ENCODE measurements at regions of chr12 and their contacts with region 1.

Region 1: GRCh38 chr12:121499929-121500793 is 80.7 kb downstream of the KDM2B start:
- DNase-seq: peak; percentile 84
- H3K4me3 ChIP-seq: no peak overlapping the region
- H3K27ac ChIP-seq: no peak overlapping the region
- H3K4me1 ChIP-seq: peaks cover 5% of the 10 kb centered on the region
- H3K27me3 ChIP-seq: no peaks in the 10 kb centered on the region
- CTCF ChIP-seq: peak; percentile 93

Region 2: GRCh38 chr12:121678716-121679580 is 178.8 kb after region 1 on chr12:
- CTCF ChIA-PET with region 1: no interaction called
- POLR2A ChIA-PET with region 1: no interaction called
- intact Hi-C with region 1: loop called (anchors 1 kb)
- DNase-seq: no peak
- H3K4me3 ChIP-seq: no peak overlapping the region
- H3K27ac ChIP-seq: peak overlapping the region; percentile 44
- H3K4me1 ChIP-seq: no peaks in the 10 kb centered on the region
- H3K27me3 ChIP-seq: no peaks in the 10 kb centered on the region
- CTCF ChIP-seq: no peak